Esophagus muscularis mucosa (tissue), 4 donors: ENCODE measurements at regions of chr1 and their contacts with region 1.

Region 1: GRCh38 chr1:5888606-5889211 is 103.5 kb downstream of the NPHP4 start:
- DNase-seq: no peak
- H3K4me3 ChIP-seq: no peak overlapping the region
- H3K27ac ChIP-seq: no peak overlapping the region
- H3K4me1 ChIP-seq: no peaks in the 10 kb centered on the region
- H3K27me3 ChIP-seq: no peaks in the 10 kb centered on the region
- CTCF ChIP-seq: no peak
- EP300 ChIP-seq: no peak
- POLR2A ChIP-seq: no peak

Region 2: GRCh38 chr1:3924825-3925220 is 1963.9 kb before region 1 on chr1:
- intact Hi-C with region 1: loop called (anchors 10 kb)
- DNase-seq: no peak
- H3K4me3 ChIP-seq: no peak overlapping the region
- H3K27ac ChIP-seq: no peak overlapping the region
- H3K4me1 ChIP-seq: peaks cover 0 to 8% (median 0%) of the 10 kb centered on the region in 4 donors
- H3K27me3 ChIP-seq: peaks cover 0 to 56% (median under 1%) of the 10 kb centered on the region in 4 donors
- CTCF ChIP-seq: no peak
- EP300 ChIP-seq: no peak
- POLR2A ChIP-seq: no peak